Ascending aorta (tissue), 2 donors: ENCODE measurements at regions of chr9 and their contacts with region 1.

Region 1: DNA sequence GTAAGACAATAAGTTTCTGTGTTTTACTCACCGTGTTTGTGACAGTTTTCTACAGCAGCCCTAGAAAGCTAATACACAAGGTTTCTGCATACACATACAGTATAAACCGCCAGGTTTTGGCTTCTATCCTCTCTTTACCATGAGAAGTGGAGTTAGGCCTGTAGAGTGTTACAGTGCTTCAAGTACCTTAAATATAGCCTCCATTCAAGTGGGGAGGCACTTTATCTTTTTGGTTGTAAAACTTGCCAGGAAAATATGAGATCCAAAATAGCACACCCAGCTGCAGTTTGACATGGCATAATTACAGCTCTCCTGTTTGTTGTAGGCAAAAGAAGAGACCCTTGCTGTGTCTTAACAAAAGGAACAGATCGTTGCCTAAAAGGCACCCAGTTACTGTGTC is 90.3 kb upstream of the PTPN3 start:
- DNase-seq: no peak
- H3K4me3 ChIP-seq: no peak overlapping the region
- H3K27ac ChIP-seq: peak overlapping the region; percentile 1
- H3K4me1 ChIP-seq: peaks cover 0 to 13% of the 10 kb centered on the region in 2 donors
- H3K27me3 ChIP-seq: no peaks in the 10 kb centered on the region
- CTCF ChIP-seq: no peak

Region 2: DNA sequence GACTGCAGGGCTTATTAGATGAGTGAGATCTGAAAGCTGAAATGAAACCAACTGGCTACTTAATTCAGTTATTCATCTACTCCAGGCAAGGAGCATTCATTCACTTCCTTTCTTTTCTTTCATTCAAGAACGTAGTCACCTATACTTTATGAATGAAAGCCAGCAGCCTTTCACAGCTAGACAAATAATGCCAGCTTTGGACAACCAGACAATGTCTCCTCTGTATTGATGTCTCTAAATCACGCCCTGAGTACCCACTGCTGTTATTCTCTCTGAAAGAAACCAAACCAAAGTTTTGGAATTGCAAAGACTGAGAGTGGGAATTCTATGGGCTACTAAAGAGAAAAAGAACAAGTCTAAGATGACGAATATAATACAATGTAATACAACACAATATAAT is 30.9 kb after region 1 on chr9:
- intact Hi-C with region 1: no loop called
- DNase-seq: no peak
- H3K4me3 ChIP-seq: no peak overlapping the region
- H3K27ac ChIP-seq: no peak overlapping the region
- H3K4me1 ChIP-seq: no peaks in the 10 kb centered on the region
- H3K27me3 ChIP-seq: no peaks in the 10 kb centered on the region
- CTCF ChIP-seq: no peak

Region 3: GRCh38 chr9:109640580-109641371 is 52.4 kb after region 1 on chr9:
- intact Hi-C with region 1: loop called (anchors 5 kb)
- DNase-seq: peak in 1 of 2 donors; percentile 79
- H3K4me3 ChIP-seq: peak overlapping the region; percentile 49 to 67
- H3K27ac ChIP-seq: no peak overlapping the region
- H3K4me1 ChIP-seq: peaks cover 3 to 5% of the 10 kb centered on the region in 2 donors
- H3K27me3 ChIP-seq: no peaks in the 10 kb centered on the region
- CTCF ChIP-seq: no peak